ENCODE measurements at regions of chr2 and their contacts with region 1.

Region 1: GRCh38 chr2:134441153-134441863 is 187.4 kb downstream of the MGAT5 start:
- DNase-seq: no peak
- ATAC-seq: no peak
- H3K4me3 Mint-ChIP-seq: no peak overlapping the region
- H3K27ac Mint-ChIP-seq: no peak overlapping the region
- H3K4me1 Mint-ChIP-seq: no peaks in the 10 kb centered on the region
- H3K27me3 Mint-ChIP-seq: no peaks in the 10 kb centered on the region

Region 2: DNA sequence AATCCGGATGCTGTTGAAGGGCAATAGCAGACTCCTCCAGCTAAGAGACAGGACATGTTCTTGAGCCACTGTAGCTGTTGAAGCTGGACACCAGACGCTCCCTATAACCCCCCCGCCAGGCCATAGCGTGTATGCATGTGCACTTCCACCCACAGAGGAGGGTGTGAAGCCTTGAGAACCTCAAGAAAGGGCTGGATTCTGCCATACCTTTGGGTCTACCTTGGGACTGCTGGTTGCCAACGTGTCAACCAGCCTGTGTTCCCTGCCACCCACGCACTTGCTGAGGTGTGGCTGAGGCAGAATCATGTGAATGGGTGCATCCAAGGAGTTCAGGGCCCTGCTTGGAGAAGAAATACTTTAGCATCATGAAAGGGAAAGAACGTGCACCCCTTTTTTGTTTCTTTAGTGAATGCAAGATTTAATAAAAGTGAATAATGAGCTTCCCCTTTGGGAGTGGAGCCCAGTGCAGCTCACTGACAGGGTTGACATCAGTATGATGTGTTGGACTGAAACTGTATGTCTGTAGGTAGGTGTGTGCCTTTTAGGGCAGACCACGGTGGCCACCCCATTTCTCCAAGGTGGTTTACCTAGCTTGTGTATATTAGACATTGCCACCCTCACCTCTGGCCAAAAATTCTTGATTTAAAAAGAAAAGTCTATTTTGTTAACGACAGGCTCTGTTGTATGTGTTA is 10.9 kb after region 1 on chr2:
- CTCF ChIA-PET with region 1: interaction called, 12 read pairs
- POLR2A ChIA-PET with region 1: no interaction called
- intact Hi-C with region 1: no loop called
- DNase-seq: no peak
- ATAC-seq: no peak
- H3K4me3 Mint-ChIP-seq: no peak overlapping the region
- H3K27ac Mint-ChIP-seq: no peak overlapping the region
- H3K4me1 Mint-ChIP-seq: no peaks in the 10 kb centered on the region
- H3K27me3 Mint-ChIP-seq: no peaks in the 10 kb centered on the region

Region 3: DNA sequence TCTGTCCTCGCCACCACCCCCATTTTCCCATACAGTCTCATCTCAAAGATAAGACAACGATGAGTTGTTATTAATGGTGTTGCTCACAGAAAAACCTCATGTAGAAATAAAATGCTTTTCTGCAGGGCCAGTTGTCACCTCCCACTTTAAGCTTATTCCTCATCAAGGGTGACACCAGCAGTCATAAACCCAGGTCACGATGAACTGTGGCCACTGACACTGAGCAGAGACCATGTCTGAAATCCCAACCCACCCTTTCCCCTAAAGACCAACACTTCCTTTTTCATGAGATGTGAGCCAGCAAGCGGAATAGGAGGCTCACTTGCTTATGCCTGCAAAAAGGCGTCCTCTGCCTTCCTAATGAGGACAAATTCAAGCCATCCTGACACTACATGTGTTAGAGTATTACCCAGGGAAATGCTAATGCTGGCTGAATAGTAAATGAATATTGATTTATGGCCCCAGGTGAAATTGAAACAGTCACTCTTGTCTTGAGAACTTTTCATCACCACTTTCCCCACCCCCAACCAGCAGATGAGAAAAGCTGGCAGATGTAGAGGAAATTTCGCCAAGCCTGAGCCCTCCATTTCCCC is 40.9 kb after region 1 on chr2:
- CTCF ChIA-PET with region 1: no interaction called
- POLR2A ChIA-PET with region 1: no interaction called
- intact Hi-C with region 1: no loop called
- DNase-seq: no peak
- ATAC-seq: no peak
- H3K4me3 Mint-ChIP-seq: no peak overlapping the region
- H3K27ac Mint-ChIP-seq: no peak overlapping the region
- H3K4me1 Mint-ChIP-seq: no peaks in the 10 kb centered on the region
- H3K27me3 Mint-ChIP-seq: peaks cover 4% of the 10 kb centered on the region

Region 4: DNA sequence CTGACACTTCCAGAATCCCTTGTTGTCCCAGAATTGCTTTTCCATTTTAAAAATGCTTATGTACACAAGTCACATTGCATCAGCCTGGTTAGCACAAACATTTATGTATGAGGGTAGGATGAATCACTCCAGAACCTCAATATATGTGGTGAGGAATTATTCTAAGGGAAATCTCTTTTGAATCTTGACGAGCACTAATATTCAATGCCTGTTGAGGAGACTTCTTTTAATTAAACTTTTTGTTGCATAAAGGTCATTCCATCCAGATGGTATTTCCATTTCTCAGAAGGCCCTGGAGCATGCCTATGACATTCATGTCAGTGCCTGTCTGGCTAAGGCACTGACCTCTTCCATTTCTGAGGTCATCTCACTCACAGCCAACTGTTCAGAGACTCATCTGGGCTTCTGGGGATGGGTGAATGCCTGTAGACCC is 425.3 kb after region 1 on chr2:
- CTCF ChIA-PET with region 1: no interaction called
- POLR2A ChIA-PET with region 1: no interaction called
- intact Hi-C with region 1: no loop called
- DNase-seq: no peak
- ATAC-seq: no peak
- H3K4me3 Mint-ChIP-seq: no peak overlapping the region
- H3K27ac Mint-ChIP-seq: no peak overlapping the region
- H3K4me1 Mint-ChIP-seq: no peaks in the 10 kb centered on the region
- H3K27me3 Mint-ChIP-seq: no peaks in the 10 kb centered on the region

Measured in activated CD4-positive, alpha-beta T cell treated with anti-CD3 and anti-CD28 coated beads for 36 hours (primary cell).